ENCODE measurements at regions of chr14 and their contacts with region 1.

Region 1: GRCh38 chr14:52824507-52824906 is 33.1 kb upstream of the GNPNAT1 start:
- DNase-seq: no peak
- H3K4me3 ChIP-seq: no peak overlapping the region
- H3K27ac ChIP-seq: no peak overlapping the region
- H3K4me1 ChIP-seq: peaks cover 0 to 4% (median 0%) of the 10 kb centered on the region in 4 donors
- H3K27me3 ChIP-seq: no peaks in the 10 kb centered on the region
- CTCF ChIP-seq: no peak
- EP300 ChIP-seq: no peak
- POLR2A ChIP-seq: no peak

Region 2: DNA sequence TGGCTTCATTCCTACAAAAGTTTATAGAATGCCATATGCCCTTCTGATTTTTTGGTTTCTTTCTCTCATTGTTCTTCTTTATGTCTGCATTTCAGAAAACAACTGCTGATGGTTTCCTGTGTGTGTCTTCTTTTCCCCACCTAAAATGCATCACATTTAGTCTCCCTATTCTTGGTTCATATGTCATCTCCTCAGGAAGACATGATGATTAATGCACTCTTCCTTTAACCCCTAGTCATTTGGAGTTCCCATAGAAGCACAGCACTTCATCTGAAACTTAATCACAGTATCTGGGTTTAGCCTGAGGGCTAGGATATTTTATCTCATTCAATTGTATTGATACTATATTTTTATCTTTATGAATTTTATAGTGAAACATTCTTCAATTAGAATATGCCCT is 54.6 kb before region 1 on chr14:
- in situ Hi-C with region 1: no loop called
- intact Hi-C with region 1: no loop called
- DNase-seq: no peak
- H3K4me3 ChIP-seq: no peak overlapping the region
- H3K27ac ChIP-seq: no peak overlapping the region
- H3K4me1 ChIP-seq: no peaks in the 10 kb centered on the region
- H3K27me3 ChIP-seq: no peaks in the 10 kb centered on the region
- CTCF ChIP-seq: no peak
- EP300 ChIP-seq: no peak
- POLR2A ChIP-seq: no peak

Region 3: GRCh38 chr14:52950898-52951689 is 126.6 kb after region 1 on chr14 and contains the start of gene FERMT2:
- in situ Hi-C with region 1: loop called in 1 of 4 experiments (anchors 10 kb)
- intact Hi-C with region 1: no loop called
- DNase-seq: peak; percentile 76
- H3K4me3 ChIP-seq: peak within 1 kb of the TSS; percentile 60 to 96 (median 74)
- H3K27ac ChIP-seq: peak within 1 kb of the TSS; percentile 94 to 96 (median 94)
- H3K4me1 ChIP-seq: peaks cover 0 to 38% (median 10%) of the 10 kb centered on the region in 4 donors
- H3K27me3 ChIP-seq: peaks cover 54% of the 10 kb centered on the region
- CTCF ChIP-seq: no peak
- EP300 ChIP-seq: no peak
- POLR2A ChIP-seq: no peak
- total RNA-seq, gene FERMT2: 38.6 to 186 (median 62.7) TPM

Region 4: DNA sequence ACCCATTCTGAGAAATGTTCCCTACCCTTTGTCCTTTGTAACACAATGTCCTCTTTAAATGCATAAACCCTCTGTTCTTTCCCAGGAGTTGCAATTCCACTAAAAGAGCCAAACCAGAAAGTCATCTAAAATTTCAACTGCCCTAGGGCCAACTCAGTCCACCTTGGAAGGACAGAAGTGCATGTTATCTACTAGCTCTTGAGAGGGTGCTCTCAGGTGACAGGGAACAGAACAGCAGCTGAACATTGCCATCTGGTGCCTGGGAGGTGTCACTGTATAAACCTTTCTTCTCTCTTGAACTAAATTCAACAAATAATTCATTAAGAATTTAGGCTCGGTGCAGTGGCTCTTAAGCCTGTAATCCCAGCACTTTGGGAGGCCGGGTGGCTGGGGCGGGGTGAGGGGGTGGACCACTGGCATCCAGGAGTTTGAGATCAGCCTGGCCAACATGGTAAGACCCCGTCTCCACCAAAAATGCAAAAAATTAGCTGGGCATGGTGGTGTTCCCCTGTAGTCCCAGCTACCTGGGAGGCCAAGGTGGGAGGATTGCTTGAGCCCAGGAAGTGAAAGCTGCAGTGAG is 136.6 kb after region 1 on chr14:
- in situ Hi-C with region 1: loop called (anchors 5 to 10 kb)
- intact Hi-C with region 1: loop called (anchors 2 kb)
- DNase-seq: peak; percentile 50
- H3K4me3 ChIP-seq: no peak overlapping the region
- H3K27ac ChIP-seq: peak overlapping the region in 2 of 4 donors; percentile 26 to 27
- H3K4me1 ChIP-seq: peaks cover 0 to 8% (median 0%) of the 10 kb centered on the region in 4 donors
- H3K27me3 ChIP-seq: no peaks in the 10 kb centered on the region
- CTCF ChIP-seq: peak; percentile 49 to 63 (median 58)
- EP300 ChIP-seq: no peak
- POLR2A ChIP-seq: no peak

Region 5: DNA sequence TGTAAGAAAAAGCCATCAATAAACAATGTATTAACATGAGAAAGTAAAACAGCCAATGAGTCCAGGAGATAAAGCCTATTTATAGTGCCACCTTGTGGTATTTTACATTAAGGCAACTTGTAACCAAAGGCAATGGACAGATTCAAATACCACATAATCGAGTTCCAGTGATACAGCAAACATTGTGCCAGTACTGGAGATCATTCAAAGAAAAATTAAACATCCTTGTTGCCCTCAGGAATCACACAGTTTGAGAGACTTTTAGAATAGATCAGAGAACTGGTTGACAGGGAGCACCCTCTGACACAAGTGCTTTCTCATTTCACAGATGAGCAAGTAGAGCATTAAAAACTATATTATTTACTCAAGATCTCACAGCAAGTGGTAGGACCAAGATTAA is 230.5 kb after region 1 on chr14:
- in situ Hi-C with region 1: loop called (anchors 10 to 25 kb)
- intact Hi-C with region 1: loop called (anchors 5 kb)
- DNase-seq: no peak
- H3K4me3 ChIP-seq: no peak overlapping the region
- H3K27ac ChIP-seq: no peak overlapping the region
- H3K4me1 ChIP-seq: no peaks in the 10 kb centered on the region
- H3K27me3 ChIP-seq: no peaks in the 10 kb centered on the region
- CTCF ChIP-seq: peak; percentile 58 to 70 (median 66)
- EP300 ChIP-seq: no peak
- POLR2A ChIP-seq: no peak

Measured in transverse colon (tissue), 4 donors.